Dendritic cell treated with granulocyte-macrophage colony-stimulating factor and Interleukin-4, amounts not matched to agents 40 ng/mL and 50 ng/mL, for 4 days (primary cell): ENCODE measurements at regions of chr10 and their contacts with region 1.

Region 1: DNA sequence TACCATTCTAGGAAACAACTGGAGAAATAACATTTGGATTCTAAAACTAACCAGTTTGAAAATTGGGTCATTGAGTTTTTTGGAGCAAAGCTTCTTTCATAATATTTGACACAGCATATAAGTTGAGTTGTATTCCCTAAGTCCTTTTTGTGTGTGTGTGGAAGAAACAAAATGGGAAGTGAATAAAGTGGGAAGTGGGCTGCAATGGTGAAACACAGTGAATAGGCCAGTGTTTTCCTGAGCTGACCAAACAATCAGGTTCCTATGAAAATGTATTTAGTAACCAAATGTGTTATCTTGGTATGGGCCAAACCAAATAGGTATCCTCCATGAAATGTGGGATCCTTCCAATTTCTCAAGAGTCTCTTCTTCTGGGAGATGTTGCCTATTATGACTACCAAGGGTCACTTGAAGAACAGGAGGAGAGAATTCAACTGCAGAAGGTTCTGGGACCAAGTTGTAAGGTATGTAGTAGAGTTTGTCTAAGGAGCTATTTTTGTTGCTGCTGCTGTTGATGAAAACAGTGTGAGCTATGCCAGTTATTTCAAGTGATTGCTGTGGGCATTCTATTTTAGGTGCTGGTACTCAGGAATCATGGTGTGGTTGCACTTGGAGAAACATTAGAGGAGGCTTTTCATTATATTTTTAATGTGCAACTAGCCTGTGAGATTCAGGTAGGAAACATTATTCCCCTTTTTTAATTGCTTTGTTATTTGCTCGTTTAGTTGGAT is 88.3 kb upstream of the MXI1 start:
- H3K4me3 Mint-ChIP-seq: no peak overlapping the region
- H3K27ac Mint-ChIP-seq: no peak overlapping the region
- H3K4me1 Mint-ChIP-seq: peaks cover 13% of the 10 kb centered on the region
- H3K27me3 Mint-ChIP-seq: no peaks in the 10 kb centered on the region

Region 2: GRCh38 chr10:109978481-109978880 is 140.6 kb before region 1 on chr10:
- intact Hi-C with region 1: loop called (anchors 5 kb)
- H3K4me3 Mint-ChIP-seq: no peak overlapping the region
- H3K27ac Mint-ChIP-seq: no peak overlapping the region
- H3K4me1 Mint-ChIP-seq: peaks cover 22% of the 10 kb centered on the region
- H3K27me3 Mint-ChIP-seq: no peaks in the 10 kb centered on the region